ENCODE measurements at regions of chr6 and their contacts with region 1.

Region 1: GRCh38 chr6:11232193-11232769 is at the start of gene NEDD9:
- DNase-seq: peak; percentile 96
- ATAC-seq: peak; percentile 93
- H3K4me3 ChIP-seq: peak within 1 kb of the TSS; percentile 97
- H3K27ac ChIP-seq: peak within 1 kb of the TSS; percentile 81
- H3K4me1 ChIP-seq: peaks cover 36% of the 10 kb centered on the region
- H3K27me3 ChIP-seq: no peaks in the 10 kb centered on the region
- CTCF ChIP-seq: no peak
- total RNA-seq, gene NEDD9: 12.1 and 13.9 TPM in 2 replicates

Region 2: DNA sequence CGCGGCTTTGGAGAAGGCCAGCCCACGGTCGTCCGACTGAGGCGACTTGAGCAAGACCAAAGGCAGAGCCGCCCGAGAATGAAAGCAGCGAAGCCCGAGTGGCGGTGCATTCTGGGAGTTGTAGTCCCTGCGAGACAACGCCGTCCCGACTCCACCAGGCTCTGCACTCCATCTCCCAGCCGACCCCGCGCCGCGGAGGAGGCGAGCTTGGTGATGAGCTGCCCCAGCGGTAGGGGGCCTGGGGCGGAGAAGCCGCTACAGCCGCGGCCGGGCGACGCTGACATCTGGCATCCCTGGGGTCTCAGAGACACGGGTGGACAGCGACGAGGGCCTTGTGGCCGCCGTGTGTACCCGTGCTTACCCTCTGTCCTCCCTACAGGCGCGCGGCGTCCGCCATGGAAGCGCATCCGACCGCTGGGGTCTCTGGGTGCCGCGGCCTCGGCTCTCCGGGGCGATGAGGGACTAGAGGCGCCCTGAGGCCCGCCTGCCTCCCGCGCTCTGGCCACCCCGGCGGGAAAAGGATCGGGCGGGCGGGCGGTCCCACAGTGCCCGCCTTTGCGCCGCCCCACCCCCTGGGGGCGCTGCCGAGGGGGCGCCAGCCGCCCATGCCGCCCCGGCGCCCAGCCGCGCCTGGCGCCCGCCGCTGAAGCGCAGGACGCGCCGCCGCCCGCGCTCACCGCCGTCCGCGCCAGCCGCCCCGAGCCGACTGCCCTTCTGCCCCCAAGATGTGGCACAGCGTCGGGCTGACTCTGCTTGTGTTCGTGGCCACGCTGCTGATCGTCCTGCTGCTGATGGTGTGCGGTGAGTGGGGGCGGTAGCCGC is 138.5 kb before region 1 on chr6 and contains the start of gene SMIM13:
- CTCF ChIA-PET with region 1: no interaction called
- POLR2A ChIA-PET with region 1: interaction called, 3 read pairs
- intact Hi-C with region 1: loop called (anchors 10 kb)
- DNase-seq: peak; percentile 98
- ATAC-seq: peak; percentile 95
- H3K4me3 ChIP-seq: peak within 1 kb of the TSS; percentile 96
- H3K27ac ChIP-seq: peak within 1 kb of the TSS; percentile 69
- H3K4me1 ChIP-seq: peaks cover 18% of the 10 kb centered on the region
- H3K27me3 ChIP-seq: no peaks in the 10 kb centered on the region
- CTCF ChIP-seq: peak; percentile 45
- total RNA-seq, gene SMIM13: 7.1 and 9.0 TPM in 2 replicates

Region 3: DNA sequence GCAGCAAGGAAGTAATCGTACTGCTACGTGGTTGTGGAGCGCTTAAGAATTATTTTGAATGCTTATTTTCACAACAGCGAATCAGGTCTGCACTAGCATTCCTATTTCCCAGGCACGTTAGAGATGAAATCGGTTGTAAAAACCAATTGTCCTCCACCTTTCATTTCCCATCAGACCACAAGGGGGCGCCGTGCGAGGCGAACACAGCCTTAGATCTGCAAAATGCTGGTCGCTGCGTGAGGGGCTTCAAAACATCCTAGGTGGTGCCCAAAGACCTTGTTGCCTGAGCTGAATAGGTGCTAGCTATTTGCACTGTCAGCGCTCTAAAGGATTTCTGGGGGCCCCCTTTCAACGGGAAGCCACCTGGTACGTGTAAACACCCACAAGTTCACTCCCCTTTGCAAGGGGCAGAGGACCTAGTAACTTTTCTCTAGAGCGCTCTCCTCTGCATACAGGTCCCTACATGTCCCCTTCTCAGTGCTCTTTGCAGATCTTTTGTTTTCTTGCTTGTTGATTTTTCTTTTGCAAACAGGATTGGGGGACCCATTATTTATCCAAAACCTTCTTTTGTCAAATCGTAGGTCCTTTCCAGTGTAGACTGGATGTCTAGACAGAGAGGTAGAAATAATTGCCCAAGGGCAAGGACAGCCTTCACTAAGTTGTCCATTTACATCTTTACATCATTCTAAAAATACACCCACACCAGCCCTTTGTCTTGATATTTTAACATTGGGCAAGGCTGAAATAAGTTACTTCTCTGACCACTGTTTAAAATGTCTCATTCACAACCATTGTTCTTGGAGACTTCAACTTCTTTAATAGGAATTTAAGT is 59.6 kb before region 1 on chr6:
- CTCF ChIA-PET with region 1: no interaction called
- POLR2A ChIA-PET with region 1: no interaction called
- intact Hi-C with region 1: loop called (anchors 1 kb)
- DNase-seq: peak; percentile 71
- ATAC-seq: peak; percentile 59
- H3K4me3 ChIP-seq: no peak overlapping the region
- H3K27ac ChIP-seq: no peak overlapping the region
- H3K4me1 ChIP-seq: no peaks in the 10 kb centered on the region
- H3K27me3 ChIP-seq: no peaks in the 10 kb centered on the region
- CTCF ChIP-seq: peak; percentile 93

Region 4: GRCh38 chr6:11270030-11271027 is 38.0 kb after region 1 on chr6:
- CTCF ChIA-PET with region 1: no interaction called
- POLR2A ChIA-PET with region 1: no interaction called
- intact Hi-C with region 1: loop called (anchors 2 kb)
- DNase-seq: no peak
- ATAC-seq: no peak
- H3K4me3 ChIP-seq: no peak overlapping the region
- H3K27ac ChIP-seq: no peak overlapping the region
- H3K4me1 ChIP-seq: peaks cover 28% of the 10 kb centered on the region
- H3K27me3 ChIP-seq: no peaks in the 10 kb centered on the region
- CTCF ChIP-seq: no peak

Region 5: DNA sequence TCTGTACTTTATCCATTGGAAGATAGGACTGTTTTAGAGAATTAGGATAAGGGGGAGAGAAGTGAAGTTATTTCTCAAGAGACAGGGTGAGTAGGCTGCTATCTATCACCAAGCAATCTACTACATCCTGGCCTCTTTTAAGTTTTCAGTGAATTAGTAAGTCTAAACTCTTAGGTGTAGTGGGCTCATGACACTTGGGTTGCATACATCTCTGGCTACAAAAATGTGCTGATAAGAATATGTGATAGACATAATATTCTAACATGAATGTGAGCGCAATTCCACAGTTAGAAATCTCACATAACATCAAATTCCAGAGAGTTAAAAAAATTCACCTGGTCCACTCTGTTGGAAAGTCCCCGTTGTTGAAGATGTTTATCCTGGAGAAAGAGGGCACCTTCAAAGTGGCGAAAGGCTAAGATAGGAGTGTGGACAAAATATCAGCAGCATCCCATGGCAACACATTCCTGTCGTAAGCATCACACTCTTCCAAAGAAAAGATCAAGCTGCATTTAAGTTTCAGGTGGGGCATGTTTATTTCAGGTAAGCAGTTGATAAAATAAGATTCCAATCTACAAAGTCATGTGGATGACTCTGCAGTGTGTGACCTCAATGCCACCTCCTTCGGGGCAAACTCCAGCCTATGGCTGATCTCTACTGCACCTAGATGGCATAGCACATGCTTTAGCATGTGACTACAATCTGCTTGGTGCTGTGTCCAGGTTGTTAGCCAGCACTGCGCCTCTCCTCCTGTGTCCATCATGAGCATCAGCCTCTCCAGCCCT is 111.9 kb after region 1 on chr6:
- CTCF ChIA-PET with region 1: no interaction called
- POLR2A ChIA-PET with region 1: interaction called, 3 read pairs
- intact Hi-C with region 1: loop called (anchors 2 kb)
- DNase-seq: peak; percentile 94
- ATAC-seq: peak; percentile 93
- H3K4me3 ChIP-seq: no peak overlapping the region
- H3K27ac ChIP-seq: peak overlapping the region; percentile 78
- H3K4me1 ChIP-seq: peaks cover 32% of the 10 kb centered on the region
- H3K27me3 ChIP-seq: no peaks in the 10 kb centered on the region
- CTCF ChIP-seq: no peak